Right lobe of liver (tissue), 6 donors: ENCODE measurements at regions of chr2 and their contacts with region 1.

Region 1: DNA sequence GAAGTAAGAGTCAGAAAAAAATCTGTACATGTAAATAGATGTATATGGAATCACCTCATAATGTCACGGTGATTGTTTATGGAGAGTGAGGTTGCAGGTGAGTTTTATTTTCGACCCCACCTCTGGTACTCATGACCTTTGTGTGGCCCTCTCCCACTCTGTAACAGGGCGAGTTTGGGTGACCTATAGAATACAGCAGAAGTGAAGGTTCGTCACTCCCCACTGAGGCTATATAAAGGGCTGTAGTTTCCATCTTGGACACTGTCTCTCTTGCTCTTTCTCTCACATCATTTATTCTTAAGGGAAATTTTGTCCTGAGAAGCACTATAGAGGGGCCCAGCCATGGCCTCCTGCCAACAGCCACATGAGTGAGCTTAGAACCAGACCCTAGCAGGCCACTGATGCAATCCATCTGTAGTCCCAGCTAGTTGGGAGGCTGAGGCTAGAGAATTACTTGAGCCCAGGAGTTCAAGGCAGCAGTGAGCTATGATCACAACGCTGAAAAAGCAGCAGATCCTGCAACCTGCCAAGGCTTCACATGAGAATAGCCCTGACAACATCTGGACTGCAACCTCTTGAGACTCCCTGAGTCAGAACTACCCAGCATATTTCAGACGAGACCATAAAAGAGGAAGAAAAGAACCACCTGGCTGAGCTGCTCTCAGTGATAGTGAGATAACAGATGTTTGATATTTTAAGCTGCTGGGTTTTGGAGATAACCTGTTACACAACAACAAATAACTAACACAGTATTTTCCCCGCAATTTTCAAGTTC is 74.3 kb upstream of the SLC1A4 start:
- DNase-seq: no peak
- ATAC-seq: no peak
- H3K4me3 ChIP-seq: no peak overlapping the region
- H3K27ac ChIP-seq: no peak overlapping the region
- H3K4me1 ChIP-seq: no peaks in the 10 kb centered on the region
- H3K27me3 ChIP-seq: no peaks in the 10 kb centered on the region
- CTCF ChIP-seq: no peak
- POLR2A ChIP-seq: no peak

Region 2: DNA sequence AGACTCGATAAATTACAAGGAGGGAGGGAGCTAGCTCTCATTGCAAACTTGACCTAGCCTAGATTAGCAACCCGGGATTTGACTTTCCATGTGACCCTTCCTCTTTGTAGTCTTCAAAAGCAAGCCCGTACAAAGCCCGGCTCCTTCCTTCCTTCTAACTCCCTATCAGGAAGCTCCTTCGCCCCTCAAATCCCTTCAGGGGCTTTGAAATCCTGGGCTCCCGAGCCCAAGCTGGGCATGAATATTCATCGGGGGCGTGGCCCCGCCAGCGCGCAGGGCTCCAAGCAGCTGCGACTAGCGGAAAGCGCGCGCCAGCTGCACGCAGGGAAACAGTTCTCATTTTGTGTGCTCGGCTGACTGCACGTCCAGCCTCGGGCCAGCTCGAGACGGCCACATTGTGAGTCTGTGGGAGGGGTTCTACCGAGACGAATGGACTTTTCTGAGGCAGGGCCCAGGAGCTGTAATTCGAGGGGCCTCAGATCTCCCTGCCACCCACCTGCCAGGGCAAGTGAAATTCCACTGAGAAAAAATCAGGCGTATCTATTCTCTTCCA is 686.7 kb before region 1 on chr2:
- intact Hi-C with region 1: no loop called
- DNase-seq: peak; percentile 87 to 92 (median 90)
- ATAC-seq: peak; percentile 99
- H3K4me3 ChIP-seq: peak overlapping the region; percentile 33 to 54 (median 48)
- H3K27ac ChIP-seq: peak overlapping the region; percentile 53 to 69 (median 64)
- H3K4me1 ChIP-seq: peaks cover 0 to 7% (median under 1%) of the 10 kb centered on the region in 4 donors
- H3K27me3 ChIP-seq: no peaks in the 10 kb centered on the region
- CTCF ChIP-seq: no peak
- POLR2A ChIP-seq: peak; percentile 43

Region 3: GRCh38 chr2:64963719-64964118 is 48.8 kb after region 1 on chr2:
- intact Hi-C with region 1: no loop called
- DNase-seq: no peak
- ATAC-seq: peak; percentile 39 to 77 (median 60)
- H3K4me3 ChIP-seq: no peak overlapping the region
- H3K27ac ChIP-seq: no peak overlapping the region
- H3K4me1 ChIP-seq: peaks cover 0 to 32% (median 14%) of the 10 kb centered on the region in 4 donors
- H3K27me3 ChIP-seq: no peaks in the 10 kb centered on the region
- CTCF ChIP-seq: peak; percentile 10 to 35 (median 28)
- POLR2A ChIP-seq: no peak

Region 4: GRCh38 chr2:65040400-65041261 is 125.7 kb after region 1 on chr2:
- intact Hi-C with region 1: loop called (anchors 5 kb)
- DNase-seq: peak; percentile 81 to 89 (median 83)
- ATAC-seq: peak; percentile 99 to 100 (median 100)
- H3K4me3 ChIP-seq: peak overlapping the region in 1 of 3 donors; percentile 14
- H3K27ac ChIP-seq: no peak overlapping the region
- H3K4me1 ChIP-seq: no peaks in the 10 kb centered on the region
- H3K27me3 ChIP-seq: no peaks in the 10 kb centered on the region
- CTCF ChIP-seq: peak; percentile 93 to 97 (median 95)
- POLR2A ChIP-seq: no peak

Region 5: DNA sequence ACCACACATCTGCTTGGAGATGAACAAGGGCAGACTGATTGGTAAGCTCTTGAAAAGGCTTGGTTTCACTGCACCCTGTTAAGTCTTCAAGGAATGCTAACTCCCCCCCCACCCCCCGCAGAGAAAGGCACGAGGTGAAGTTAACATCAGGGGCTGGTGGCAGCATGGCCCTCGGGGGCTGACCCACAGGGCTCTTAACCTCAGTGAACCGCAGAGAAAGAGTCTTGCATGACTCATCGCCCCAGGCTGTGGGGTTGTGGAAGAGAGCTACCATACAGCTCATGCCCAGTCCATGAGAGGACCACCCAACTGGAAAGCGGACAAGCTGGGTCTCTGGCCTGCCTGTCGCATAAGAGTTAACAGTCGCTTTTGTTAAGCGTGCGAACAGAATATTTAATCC is 130.7 kb after region 1 on chr2:
- intact Hi-C with region 1: loop called (anchors 5 kb)
- DNase-seq: no peak
- ATAC-seq: no peak
- H3K4me3 ChIP-seq: no peak overlapping the region
- H3K27ac ChIP-seq: no peak overlapping the region
- H3K4me1 ChIP-seq: no peaks in the 10 kb centered on the region
- H3K27me3 ChIP-seq: no peaks in the 10 kb centered on the region
- CTCF ChIP-seq: no peak
- POLR2A ChIP-seq: no peak